Activated B cell treated with CpG ODN at 0.5 μM for 24 hours (primary cell): ENCODE measurements at regions of chr10 and their contacts with region 1.

Region 1: GRCh38 chr10:21495752-21496342 is 29.6 kb downstream of the SKIDA1 start:
- DNase-seq: peak; percentile 90
- ATAC-seq: peak; percentile 79
- H3K4me3 Mint-ChIP-seq: peak overlapping the region; percentile 85
- H3K27ac Mint-ChIP-seq: no peak overlapping the region
- H3K4me1 Mint-ChIP-seq: peaks cover 36% of the 10 kb centered on the region
- H3K27me3 Mint-ChIP-seq: peaks cover 51% of the 10 kb centered on the region
- CTCF ChIP-seq: peak; percentile 79

Region 2: GRCh38 chr10:20858292-20859124 is 637.3 kb before region 1 on chr10:
- CTCF ChIA-PET with region 1: no interaction called
- POLR2A ChIA-PET with region 1: interaction called, 3 read pairs
- intact Hi-C with region 1: loop called (anchors 10 kb)
- DNase-seq: no peak
- ATAC-seq: no peak
- H3K4me3 Mint-ChIP-seq: no peak overlapping the region
- H3K27ac Mint-ChIP-seq: no peak overlapping the region
- H3K4me1 Mint-ChIP-seq: no peaks in the 10 kb centered on the region
- H3K27me3 Mint-ChIP-seq: peaks cover 2% of the 10 kb centered on the region
- CTCF ChIP-seq: no peak

Region 3: DNA sequence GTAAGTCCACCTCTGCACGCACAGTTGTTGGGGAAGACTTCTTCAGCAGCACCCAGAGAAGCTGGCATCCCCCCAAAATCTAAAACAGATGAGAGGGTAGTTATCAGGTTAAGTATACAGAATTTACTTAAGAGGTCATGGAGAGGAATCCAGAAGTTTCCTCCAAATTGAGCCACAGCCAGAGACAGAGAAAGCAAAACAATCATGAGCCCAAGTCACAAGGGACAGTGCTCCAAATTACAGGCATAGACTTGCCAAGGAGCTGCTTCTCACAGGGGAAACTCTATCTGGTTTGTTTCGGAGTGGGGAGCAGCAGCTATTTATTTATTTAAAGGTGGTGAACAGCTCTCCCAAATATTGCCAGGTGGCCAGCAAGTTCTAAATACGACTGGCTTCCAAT is 278.7 kb before region 1 on chr10:
- CTCF ChIA-PET with region 1: no interaction called
- POLR2A ChIA-PET with region 1: no interaction called
- intact Hi-C with region 1: no loop called
- DNase-seq: no peak
- ATAC-seq: no peak
- H3K4me3 Mint-ChIP-seq: no peak overlapping the region
- H3K27ac Mint-ChIP-seq: no peak overlapping the region
- H3K4me1 Mint-ChIP-seq: no peaks in the 10 kb centered on the region
- H3K27me3 Mint-ChIP-seq: no peaks in the 10 kb centered on the region
- CTCF ChIP-seq: no peak

Region 4: DNA sequence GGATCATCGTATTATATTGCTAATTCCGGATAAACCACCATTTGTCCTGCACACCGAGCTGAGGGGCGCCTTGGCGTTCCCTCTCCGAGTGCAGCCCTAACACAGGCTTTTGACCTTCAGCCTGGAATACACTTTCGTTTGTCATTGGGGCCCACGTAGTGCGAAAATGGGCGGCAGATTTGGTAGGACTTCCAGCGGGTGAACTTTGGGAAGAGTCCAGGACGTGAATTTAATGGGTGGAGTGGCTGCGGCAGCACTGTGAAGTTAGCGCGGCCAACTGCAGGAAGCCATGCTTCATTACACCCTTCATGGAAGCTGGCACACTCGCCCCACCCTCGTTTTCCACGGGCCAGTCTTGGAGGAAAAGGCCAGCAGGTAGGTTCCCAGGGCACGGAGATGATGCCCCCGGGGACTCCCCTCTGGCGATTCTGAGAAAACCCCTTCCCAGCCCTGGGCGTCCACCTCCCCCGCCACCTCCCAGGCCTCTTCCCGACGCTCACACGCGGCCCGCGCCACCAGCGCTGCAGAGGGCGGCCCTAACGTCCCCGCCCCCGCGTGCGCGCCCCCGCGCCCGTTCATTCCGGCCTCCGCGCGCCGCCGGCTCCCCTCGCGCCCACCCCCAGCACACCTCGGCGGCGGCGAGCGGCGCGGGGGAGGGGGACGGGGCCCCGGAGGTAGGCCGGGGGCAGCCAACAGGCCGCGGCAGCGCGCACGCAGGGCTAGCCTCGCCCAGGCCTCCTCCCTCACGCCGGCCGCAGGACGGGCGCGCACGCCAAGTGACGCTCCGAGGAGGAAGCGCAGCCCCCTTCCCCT is 37.8 kb after region 1 on chr10 and contains the start of gene MLLT10:
- CTCF ChIA-PET with region 1: no interaction called
- POLR2A ChIA-PET with region 1: interaction called, 4 read pairs
- intact Hi-C with region 1: loop called (anchors 1 kb)
- DNase-seq: peak; percentile 94
- ATAC-seq: peak; percentile 88
- H3K4me3 Mint-ChIP-seq: peak within 1 kb of the TSS; percentile 90
- H3K27ac Mint-ChIP-seq: peak within 1 kb of the TSS; percentile 92
- H3K4me1 Mint-ChIP-seq: peaks cover 18% of the 10 kb centered on the region
- H3K27me3 Mint-ChIP-seq: peaks cover 2% of the 10 kb centered on the region
- CTCF ChIP-seq: no peak
- total RNA-seq, gene MLLT10: 40.6 and 48.7 TPM in 2 replicates

Region 5: GRCh38 chr10:21556527-21556926 is 60.7 kb after region 1 on chr10:
- CTCF ChIA-PET with region 1: no interaction called
- POLR2A ChIA-PET with region 1: no interaction called
- intact Hi-C with region 1: no loop called
- DNase-seq: no peak
- ATAC-seq: no peak
- H3K4me3 Mint-ChIP-seq: no peak overlapping the region
- H3K27ac Mint-ChIP-seq: no peak overlapping the region
- H3K4me1 Mint-ChIP-seq: peaks cover 4% of the 10 kb centered on the region
- H3K27me3 Mint-ChIP-seq: no peaks in the 10 kb centered on the region
- CTCF ChIP-seq: no peak

Region 6: GRCh38 chr10:21953585-21954057 is 457.8 kb after region 1 on chr10:
- CTCF ChIA-PET with region 1: interaction called, 8 read pairs
- POLR2A ChIA-PET with region 1: no interaction called
- intact Hi-C with region 1: loop called (anchors 2 kb)
- DNase-seq: no peak
- ATAC-seq: peak; percentile 42
- H3K4me3 Mint-ChIP-seq: no peak overlapping the region
- H3K27ac Mint-ChIP-seq: no peak overlapping the region
- H3K4me1 Mint-ChIP-seq: peaks cover 9% of the 10 kb centered on the region
- H3K27me3 Mint-ChIP-seq: no peaks in the 10 kb centered on the region
- CTCF ChIP-seq: no peak

Region 7: GRCh38 chr10:22228943-22229801 is 733.3 kb after region 1 on chr10:
- CTCF ChIA-PET with region 1: no interaction called
- POLR2A ChIA-PET with region 1: no interaction called
- intact Hi-C with region 1: loop called (anchors 1 kb)
- DNase-seq: peak; percentile 81
- ATAC-seq: peak; percentile 79
- H3K4me3 Mint-ChIP-seq: peak overlapping the region; percentile 88
- H3K27ac Mint-ChIP-seq: peak overlapping the region; percentile 96
- H3K4me1 Mint-ChIP-seq: peaks cover 15% of the 10 kb centered on the region
- H3K27me3 Mint-ChIP-seq: peaks cover 7% of the 10 kb centered on the region
- CTCF ChIP-seq: no peak

Region 8: GRCh38 chr10:22436884-22437619 is 941.2 kb after region 1 on chr10:
- CTCF ChIA-PET with region 1: no interaction called
- POLR2A ChIA-PET with region 1: no interaction called
- intact Hi-C with region 1: loop called (anchors 2 kb)
- DNase-seq: peak; percentile 88
- ATAC-seq: peak; percentile 88
- H3K4me3 Mint-ChIP-seq: peak overlapping the region; percentile 94
- H3K27ac Mint-ChIP-seq: peak overlapping the region; percentile 96
- H3K4me1 Mint-ChIP-seq: peaks cover 36% of the 10 kb centered on the region
- H3K27me3 Mint-ChIP-seq: no peaks in the 10 kb centered on the region
- CTCF ChIP-seq: no peak

Region 9: DNA sequence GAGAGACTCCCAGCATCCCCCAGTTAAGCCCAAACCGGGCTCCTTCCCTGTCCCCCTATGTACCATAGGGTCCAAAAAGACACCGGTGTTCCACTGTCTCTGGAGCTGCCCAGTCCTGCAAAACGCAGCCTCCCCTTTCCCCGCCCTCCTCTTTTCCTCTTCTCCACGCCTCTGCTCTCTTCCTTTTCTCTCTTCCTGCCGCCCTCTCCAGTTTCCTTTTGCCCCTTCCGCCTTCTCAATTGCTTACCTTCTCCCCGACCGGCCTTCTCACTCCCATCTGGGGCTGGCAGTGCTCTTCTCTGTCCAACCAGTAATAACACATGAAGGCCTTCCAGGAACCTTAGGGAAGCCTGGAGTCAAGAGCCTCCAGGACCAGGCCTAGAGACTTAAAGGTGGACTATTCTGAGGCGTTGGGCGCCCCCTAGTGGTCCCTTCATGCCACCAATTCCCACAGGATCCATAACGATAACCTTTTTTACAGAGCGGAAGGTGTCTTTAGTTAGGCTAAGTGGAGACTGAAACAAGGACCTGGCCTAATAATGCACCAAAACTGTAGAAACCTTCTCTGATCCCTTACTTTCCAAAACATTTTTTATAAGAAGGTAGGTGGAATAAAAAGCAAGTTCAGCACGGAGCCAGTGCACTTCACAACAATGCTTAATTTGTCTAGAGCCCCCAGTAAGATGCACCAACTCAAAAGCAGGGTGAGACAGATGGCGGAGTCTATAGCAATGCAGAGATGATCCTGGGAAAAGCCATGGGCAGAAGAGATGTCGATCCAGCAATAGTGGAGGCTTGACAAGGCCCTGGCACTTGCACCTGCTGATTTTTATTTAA is 1572.3 kb after region 1 on chr10:
- CTCF ChIA-PET with region 1: no interaction called
- POLR2A ChIA-PET with region 1: no interaction called
- intact Hi-C with region 1: loop called (anchors 5 kb)
- DNase-seq: peak; percentile 41
- ATAC-seq: peak; percentile 58
- H3K4me3 Mint-ChIP-seq: no peak overlapping the region
- H3K27ac Mint-ChIP-seq: no peak overlapping the region
- H3K4me1 Mint-ChIP-seq: no peaks in the 10 kb centered on the region
- H3K27me3 Mint-ChIP-seq: peaks cover 10% of the 10 kb centered on the region
- CTCF ChIP-seq: no peak